Activated naive CD4-positive, alpha-beta T cell treated with anti-CD3 and anti-CD28 coated beads for 36 hours (primary cell): ENCODE measurements at regions of chr4 and their contacts with region 1.

Region 1: DNA sequence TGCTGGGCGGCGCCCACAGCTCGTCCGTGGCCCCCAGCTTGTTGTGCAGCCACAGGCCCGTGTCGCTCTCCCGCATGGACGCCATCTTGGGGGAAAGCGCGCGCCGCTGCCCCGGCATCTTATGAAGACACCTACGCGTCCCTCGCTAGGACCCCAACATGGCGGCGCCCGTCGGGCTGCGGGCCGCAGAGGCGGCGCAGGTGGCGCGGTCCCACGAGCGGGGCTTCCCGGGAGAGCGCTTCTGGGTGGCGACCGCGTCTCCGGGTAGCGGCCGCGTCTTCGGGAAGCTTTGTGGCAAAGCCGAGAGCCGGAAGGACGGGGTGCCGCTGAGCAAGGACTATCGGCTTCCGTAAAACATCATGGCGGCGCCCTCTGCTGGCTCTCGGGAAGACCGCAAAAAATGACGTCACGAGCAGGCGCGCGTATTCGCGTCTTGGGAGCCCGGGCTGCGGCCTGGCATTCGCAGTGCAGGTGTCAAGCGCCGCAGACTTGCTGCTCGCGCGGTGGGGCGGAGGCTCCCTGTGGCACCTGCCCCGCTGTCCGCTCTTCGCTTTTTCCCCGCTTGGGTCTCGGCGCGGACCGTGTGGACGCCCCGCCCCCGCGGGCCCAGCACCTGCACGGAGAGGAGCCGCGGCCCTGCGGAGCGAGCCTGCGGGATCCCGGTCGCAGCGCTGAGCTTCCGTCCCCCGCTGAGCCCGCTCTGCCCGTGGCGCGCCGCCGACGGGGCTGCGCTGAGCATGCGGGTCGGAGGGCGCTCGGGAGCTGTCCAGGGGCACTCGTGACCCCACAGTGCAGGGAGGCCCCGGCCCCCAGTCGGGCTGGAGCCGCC is at the start of gene NELFA:
- DNase-seq: peak; percentile 97
- H3K4me3 Mint-ChIP-seq: peak within 1 kb of the TSS; percentile 85
- H3K27ac Mint-ChIP-seq: peak within 1 kb of the TSS; percentile 87
- H3K4me1 Mint-ChIP-seq: peaks cover 29% of the 10 kb centered on the region
- H3K27me3 Mint-ChIP-seq: no peaks in the 10 kb centered on the region
- total RNA-seq, gene NELFA: 44.1 to 45.3 TPM

Region 2: GRCh38 chr4:1721004-1721665 is 288.0 kb before region 1 on chr4 and contains the starts of genes TACC3 and TMEM129:
- CTCF ChIA-PET with region 1: no interaction called
- intact Hi-C with region 1: loop called (anchors 1 kb)
- DNase-seq: peak; percentile 96
- H3K4me3 Mint-ChIP-seq: peak within 1 kb of the TSS; percentile 94
- H3K27ac Mint-ChIP-seq: peak within 1 kb of the TSS; percentile 98
- H3K4me1 Mint-ChIP-seq: peaks cover 53% of the 10 kb centered on the region
- H3K27me3 Mint-ChIP-seq: no peaks in the 10 kb centered on the region
- total RNA-seq, gene TACC3: 246 to 264 TPM
- total RNA-seq, gene TMEM129: 19.0 to 19.8 TPM

Region 3: DNA sequence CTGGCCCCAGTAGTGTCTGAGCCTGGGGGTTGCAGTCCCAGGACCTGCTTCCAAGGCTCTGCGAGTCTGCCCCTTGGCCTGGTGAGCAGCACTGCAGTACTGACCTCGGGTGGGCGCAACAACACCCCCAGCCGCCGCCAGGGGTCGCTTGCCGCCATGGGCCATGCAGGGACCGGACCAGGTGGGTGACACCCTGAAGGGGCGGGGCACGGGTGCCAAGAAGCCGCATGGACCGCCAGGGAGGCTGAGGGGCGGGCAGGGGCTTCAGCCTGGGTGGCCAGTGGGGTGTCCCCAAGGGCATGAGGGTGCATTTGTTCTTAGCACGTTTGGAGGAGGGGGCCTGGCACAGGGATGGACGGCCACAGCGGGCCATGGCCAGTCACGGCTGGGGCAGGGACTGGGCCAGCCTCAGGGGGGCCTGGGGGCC is 262.8 kb before region 1 on chr4:
- CTCF ChIA-PET with region 1: no interaction called
- intact Hi-C with region 1: loop called (anchors 2 kb)
- DNase-seq: peak; percentile 81
- H3K4me3 Mint-ChIP-seq: no peak overlapping the region
- H3K27ac Mint-ChIP-seq: no peak overlapping the region
- H3K4me1 Mint-ChIP-seq: no peaks in the 10 kb centered on the region
- H3K27me3 Mint-ChIP-seq: no peaks in the 10 kb centered on the region

Region 4: DNA sequence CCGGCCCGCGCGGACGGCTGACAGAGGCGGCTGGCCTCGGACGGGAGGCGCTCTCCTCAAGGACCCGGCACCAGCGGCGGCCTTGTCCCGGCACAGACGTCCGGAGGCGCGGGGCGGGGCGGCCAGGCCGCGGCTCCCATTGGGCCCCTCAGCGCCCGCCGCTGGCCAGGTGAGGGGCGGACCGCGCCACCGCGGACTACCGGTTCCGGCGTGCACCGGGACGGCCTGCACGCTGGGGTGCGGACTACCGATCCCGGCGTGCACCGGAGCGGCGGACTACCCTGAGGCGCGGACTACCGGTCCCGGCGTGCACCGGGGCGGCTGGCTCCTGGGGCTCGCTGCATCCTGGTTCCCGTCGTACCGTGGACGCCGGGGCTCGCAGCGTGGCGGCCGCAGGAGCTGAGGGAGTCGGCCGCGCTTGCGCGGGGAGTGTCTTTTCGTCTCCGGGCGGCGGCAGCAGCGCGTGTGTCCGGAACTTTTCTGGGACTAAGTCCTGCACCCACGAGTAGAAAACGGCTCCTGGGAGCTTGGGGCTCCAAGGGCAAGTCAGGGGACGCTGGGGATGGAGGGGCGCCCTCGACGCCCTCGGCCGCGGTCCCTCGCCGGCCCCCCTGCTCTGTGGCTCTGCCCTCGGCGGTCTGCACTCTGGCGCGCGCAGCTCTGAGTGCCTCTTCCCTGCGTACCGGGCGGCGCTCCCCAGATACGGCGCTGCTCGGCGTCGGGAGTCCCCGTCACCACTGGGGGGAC is 152.9 kb before region 1 on chr4 and contains the start of gene LETM1:
- CTCF ChIA-PET with region 1: no interaction called
- intact Hi-C with region 1: loop called (anchors 1 kb)
- DNase-seq: peak; percentile 95
- H3K4me3 Mint-ChIP-seq: peak within 1 kb of the TSS; percentile 79
- H3K27ac Mint-ChIP-seq: no peak within 1 kb of the TSS
- H3K4me1 Mint-ChIP-seq: peaks cover 38% of the 10 kb centered on the region
- H3K27me3 Mint-ChIP-seq: no peaks in the 10 kb centered on the region
- total RNA-seq, gene LETM1: 36.3 to 40.5 TPM

Region 5: DNA sequence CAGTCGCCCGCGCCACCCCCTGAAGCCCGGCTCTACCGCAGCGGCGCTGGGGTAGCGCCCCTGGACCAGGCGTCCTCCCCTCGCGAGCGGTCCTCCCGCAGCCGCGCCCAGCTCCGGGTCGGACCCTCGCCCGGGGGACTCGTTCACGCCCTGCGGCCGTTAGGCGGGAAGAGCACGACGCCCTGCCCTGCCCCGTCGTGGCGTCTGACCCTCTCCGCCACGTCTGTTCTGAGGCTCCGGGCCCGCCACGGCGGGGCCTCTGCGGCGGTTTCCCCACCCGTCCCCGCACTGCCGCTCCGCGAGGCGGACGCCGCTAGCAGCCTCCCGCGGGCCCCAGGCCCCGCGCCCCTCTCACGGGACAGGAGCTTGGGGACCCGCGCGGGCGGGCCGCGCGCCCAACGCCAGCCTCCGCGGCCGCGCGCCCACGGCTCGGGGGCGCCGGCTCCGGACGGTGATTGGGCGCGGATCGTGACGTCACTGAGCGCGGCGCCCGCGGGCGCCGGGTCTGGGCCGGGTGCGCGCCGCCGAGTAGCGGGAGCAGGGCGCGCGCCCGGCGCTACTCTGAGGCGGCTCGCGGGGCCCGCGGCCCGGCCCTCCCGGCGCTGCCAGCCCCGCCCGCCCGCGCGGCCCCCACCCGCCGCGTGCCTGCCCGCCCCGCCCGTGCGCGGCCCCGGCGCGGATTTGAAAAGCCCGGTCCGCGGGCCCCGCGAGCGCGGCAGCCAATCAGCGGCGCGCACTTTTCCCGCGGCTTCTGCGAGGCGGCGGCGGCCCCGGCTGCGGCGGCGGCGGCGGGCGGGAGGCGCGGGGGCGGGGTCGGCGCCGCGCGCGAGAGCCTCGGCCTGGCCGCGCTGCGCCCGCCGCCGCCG is 138.3 kb before region 1 on chr4 and contains the start of gene NSD2:
- CTCF ChIA-PET with region 1: interaction called, 3 read pairs
- intact Hi-C with region 1: loop called (anchors 1 kb)
- DNase-seq: peak; percentile 90
- H3K4me3 Mint-ChIP-seq: peak within 1 kb of the TSS; percentile 92
- H3K27ac Mint-ChIP-seq: peak within 1 kb of the TSS; percentile 96
- H3K4me1 Mint-ChIP-seq: peaks cover 35% of the 10 kb centered on the region
- H3K27me3 Mint-ChIP-seq: no peaks in the 10 kb centered on the region
- total RNA-seq, gene NSD2: 246 to 250 TPM

Region 6: DNA sequence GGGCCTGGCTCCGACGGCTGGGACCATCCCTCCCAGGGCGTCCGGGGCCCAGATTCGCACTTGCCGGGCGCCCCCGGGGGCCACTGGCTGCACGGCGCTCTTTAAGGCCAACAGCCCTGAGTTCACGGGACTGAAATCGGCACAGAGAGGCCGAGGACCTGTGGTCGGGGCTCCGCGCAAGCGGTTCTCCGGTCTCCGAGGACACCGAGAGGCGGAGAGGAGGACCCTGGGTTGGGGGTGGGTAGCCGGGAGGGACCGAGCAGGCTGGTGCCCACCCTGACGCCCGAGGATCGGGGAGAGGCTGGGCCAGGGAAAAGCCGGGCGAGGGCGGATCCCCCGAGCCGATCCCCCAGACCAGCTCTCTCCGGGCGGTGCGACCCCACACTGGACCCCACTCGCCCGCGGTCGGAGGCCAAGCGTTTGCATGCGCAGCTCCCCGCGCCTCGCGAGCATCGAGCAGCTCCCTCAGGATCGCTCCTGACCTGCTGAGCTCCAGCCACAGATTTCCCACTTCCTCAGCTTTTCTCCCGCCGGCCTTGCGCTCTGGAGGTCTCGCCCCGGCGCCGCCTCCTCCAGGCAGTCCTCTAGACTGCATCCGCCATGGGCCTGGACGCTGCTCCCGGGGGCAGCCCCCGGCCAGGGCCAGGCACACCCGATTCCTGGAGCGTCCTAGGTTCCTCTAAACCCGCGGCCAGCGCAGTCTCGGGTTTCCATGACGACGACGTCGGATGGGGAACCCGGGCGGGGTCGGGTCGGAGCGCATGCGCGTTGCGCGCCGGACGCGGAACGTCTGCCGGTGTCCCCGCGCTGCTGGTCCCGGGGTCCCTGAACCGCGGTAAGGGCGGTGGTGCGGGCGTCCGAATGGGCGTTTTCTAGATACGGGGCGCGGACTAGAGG is 32.4 kb after region 1 on chr4:
- CTCF ChIA-PET with region 1: interaction called, 3 read pairs
- intact Hi-C with region 1: loop called (anchors 1 kb)
- DNase-seq: peak; percentile 88
- H3K4me3 Mint-ChIP-seq: peak overlapping the region; percentile 76
- H3K27ac Mint-ChIP-seq: no peak overlapping the region
- H3K4me1 Mint-ChIP-seq: peaks cover 4% of the 10 kb centered on the region
- H3K27me3 Mint-ChIP-seq: peaks cover 19% of the 10 kb centered on the region

Region 7: DNA sequence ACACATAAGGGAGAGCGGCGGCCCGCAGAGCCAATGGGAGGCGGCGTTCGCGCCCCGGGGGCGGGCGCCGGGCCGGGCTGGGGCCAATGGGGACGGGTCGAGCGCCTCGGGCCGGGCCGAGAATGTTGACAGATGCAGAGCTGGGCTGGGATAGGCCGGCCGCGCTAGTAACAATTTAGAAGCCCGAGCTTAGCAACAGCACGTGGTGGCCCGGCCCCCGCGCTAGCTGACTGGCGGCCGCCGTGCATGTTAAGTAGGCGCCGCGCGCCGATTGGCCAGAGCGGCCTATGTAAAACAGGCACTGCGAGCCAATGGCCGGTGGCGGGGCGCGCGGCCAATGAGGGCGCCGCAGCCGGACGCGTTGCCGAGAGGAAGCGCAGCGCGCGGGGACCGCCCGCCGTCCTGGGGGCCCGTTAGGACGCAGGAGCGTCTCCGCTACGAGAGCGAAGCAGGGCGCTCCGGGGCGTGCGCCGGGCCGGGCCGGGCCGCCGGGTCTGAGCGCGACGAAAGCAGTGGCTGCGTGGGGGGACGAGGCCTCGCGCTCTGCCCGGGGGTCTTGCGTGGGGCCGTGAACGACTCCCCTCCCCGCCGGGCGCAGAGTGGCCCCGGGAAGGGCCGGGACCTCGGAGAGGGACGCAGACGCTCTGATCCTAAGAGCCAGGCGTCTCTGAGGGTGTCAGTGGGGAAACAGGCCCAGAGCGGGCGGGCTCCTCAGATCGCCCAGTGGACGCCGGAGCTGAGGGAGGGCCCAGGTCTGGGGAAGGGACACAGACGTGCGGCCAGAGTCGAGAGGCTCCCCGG is 253.3 kb after region 1 on chr4:
- CTCF ChIA-PET with region 1: no interaction called
- intact Hi-C with region 1: loop called (anchors 1 kb)
- DNase-seq: peak; percentile 98
- H3K4me3 Mint-ChIP-seq: peak overlapping the region; percentile 69
- H3K27ac Mint-ChIP-seq: no peak overlapping the region
- H3K4me1 Mint-ChIP-seq: peaks cover 2% of the 10 kb centered on the region
- H3K27me3 Mint-ChIP-seq: no peaks in the 10 kb centered on the region